ENCODE measurements at regions of chr6 and their contacts with region 1.

Region 1: DNA sequence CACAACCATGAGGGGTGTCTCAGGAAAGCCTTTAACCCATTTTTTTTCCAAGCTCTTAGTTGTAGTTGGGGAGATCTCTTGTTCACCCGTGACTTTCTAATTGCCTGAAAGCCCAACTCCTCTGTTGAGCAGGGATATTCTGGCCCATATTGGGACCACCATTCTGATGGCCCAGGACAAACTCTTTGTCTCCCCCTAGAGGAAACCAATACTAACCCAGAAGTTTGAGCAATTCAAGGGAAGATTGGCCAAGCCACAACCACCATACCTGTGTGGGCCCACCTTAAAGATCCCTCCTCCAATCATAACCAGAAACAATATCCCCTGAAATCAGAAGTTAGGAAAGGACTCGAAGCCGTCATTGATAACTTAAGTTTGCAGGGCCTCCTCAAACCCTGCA is 132.6 kb downstream of the THBS2 start:
- DNase-seq: no peak
- H3K4me3 ChIP-seq: no peak overlapping the region
- H3K27ac ChIP-seq: no peak overlapping the region
- H3K4me1 ChIP-seq: no peaks in the 10 kb centered on the region
- H3K27me3 ChIP-seq: no peaks in the 10 kb centered on the region
- CTCF ChIP-seq: peak; percentile 31; the same call in 1 of the 2 replicates

Region 2: GRCh38 chr6:169271158-169271876 is 150.3 kb after region 1 on chr6:
- CTCF ChIA-PET with region 1: no interaction called
- POLR2A ChIA-PET with region 1: interaction called, 11 read pairs
- intact Hi-C with region 1: no loop called
- DNase-seq: no peak
- H3K4me3 ChIP-seq: no peak overlapping the region
- H3K27ac ChIP-seq: no peak overlapping the region
- H3K4me1 ChIP-seq: no peaks in the 10 kb centered on the region
- H3K27me3 ChIP-seq: no peaks in the 10 kb centered on the region
- CTCF ChIP-seq: no peak

Region 3: DNA sequence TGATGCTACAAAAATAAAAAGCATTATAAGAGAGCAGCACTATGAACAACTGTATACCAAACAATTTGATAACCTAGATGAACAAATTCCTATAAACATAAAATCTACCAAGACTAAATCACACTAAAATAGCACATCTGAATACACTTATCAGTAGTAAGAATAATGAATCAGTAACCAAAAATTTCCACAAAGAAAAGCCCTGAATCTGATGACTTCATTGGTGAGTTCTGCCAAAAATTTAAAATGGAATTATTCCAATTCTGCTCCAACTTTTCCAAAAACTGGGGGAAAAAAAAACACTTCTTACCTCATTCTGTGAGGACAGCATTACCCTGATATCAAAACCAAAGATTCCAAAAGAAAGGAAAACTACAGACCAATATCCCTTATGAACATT is 374.6 kb after region 1 on chr6:
- CTCF ChIA-PET with region 1: no interaction called
- POLR2A ChIA-PET with region 1: no interaction called
- intact Hi-C with region 1: no loop called
- DNase-seq: no peak
- H3K4me3 ChIP-seq: no peak overlapping the region
- H3K27ac ChIP-seq: no peak overlapping the region
- H3K4me1 ChIP-seq: no peaks in the 10 kb centered on the region
- H3K27me3 ChIP-seq: no peaks in the 10 kb centered on the region
- CTCF ChIP-seq: no peak

Measured in A673 (cell line).